Heart right ventricle (tissue), 16 donors: ENCODE measurements at regions of chr4 and their contacts with region 1.

Region 1: GRCh38 chr4:1249148-1249730 is 309 bp upstream of the CTBP1 start:
- DNase-seq: peak; percentile 85 to 89
- ATAC-seq: peak; percentile 40 to 75 (median 66)
- H3K4me3 ChIP-seq: peak overlapping the region; percentile 45 to 86 (median 78)
- H3K27ac ChIP-seq: peak overlapping the region; percentile 91 to 99 (median 98)
- H3K4me1 ChIP-seq: peaks cover 43 to 60% (median 51%) of the 10 kb centered on the region in 9 donors
- H3K27me3 ChIP-seq: no peaks in the 10 kb centered on the region
- CTCF ChIP-seq: peak in 1 of 9 donors; percentile 17

Region 2: DNA sequence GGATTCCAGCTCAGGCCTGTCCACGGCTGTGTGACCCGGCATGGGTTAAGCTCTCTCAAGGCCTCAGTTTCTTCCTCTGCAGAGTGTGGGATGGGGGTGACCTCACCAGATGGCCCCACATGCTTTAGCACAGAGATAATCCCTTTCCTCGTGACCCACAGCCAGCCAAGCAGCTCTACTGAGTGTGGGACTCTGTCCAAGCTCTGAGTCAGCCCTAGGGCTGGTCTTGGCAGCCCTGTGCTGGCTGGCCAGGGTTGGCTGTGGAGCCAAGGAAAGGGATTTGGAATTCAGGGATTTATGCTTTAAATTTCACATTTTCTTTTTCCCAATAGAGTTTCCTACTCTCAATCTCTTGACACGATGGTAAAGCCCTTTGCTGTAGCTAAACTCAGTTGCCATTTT is 57.1 kb before region 1 on chr4:
- intact Hi-C with region 1: loop called in 1 of 10 experiments (anchors 5 kb)
- DNase-seq: peak; percentile 76 to 90
- ATAC-seq: peak; percentile 93 to 97 (median 96)
- H3K4me3 ChIP-seq: peak overlapping the region in 1 of 10 donors; percentile 2
- H3K27ac ChIP-seq: peak overlapping the region; percentile 28 to 92 (median 84)
- H3K4me1 ChIP-seq: peaks cover 15 to 40% (median 34%) of the 10 kb centered on the region in 9 donors
- H3K27me3 ChIP-seq: no peaks in the 10 kb centered on the region
- CTCF ChIP-seq: no peak

Region 3: DNA sequence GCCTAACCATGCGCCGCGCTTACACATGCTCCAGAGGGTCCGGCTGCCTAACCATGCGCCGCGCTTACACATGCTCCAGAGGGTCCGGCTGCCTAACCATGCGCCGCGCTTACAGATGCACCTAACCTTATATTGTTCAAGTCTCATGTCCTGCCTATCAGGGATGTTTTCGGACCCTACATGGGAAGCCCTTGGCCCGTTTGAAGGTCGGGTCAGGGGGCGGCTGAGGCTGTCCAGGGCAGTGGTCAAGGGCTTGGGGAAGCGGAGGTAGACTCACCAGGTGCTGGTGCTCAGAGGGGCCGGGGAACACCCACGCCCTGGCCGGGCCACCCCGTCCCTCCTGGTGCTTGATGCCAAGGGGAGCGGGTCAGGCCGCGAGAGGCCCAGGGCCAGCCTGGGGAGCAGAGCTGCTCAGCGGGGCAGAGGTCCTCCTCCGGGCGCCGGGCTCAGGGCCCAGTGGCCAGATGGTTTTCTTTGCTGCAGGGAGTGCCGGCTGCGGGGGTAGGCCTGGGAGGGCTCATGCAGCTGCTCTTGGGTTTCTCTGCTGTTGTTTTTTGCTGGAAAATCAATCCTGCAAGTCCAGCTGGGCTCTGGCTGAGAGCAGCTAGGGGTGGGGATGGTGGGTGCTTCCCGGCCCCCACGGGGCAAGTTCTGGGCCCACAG is 41.5 kb before region 1 on chr4:
- intact Hi-C with region 1: loop called in 2 of 10 experiments (anchors 5 kb)
- DNase-seq: peak in 1 of 2 donors; percentile 75
- ATAC-seq: peak; percentile 12 to 59 (median 37)
- H3K4me3 ChIP-seq: peak overlapping the region in 5 of 10 donors; percentile 2 to 28 (median 11)
- H3K27ac ChIP-seq: peak overlapping the region; percentile 57 to 81 (median 70)
- H3K4me1 ChIP-seq: peaks cover 26 to 56% (median 49%) of the 10 kb centered on the region in 9 donors
- H3K27me3 ChIP-seq: no peaks in the 10 kb centered on the region
- CTCF ChIP-seq: no peak

Region 4: GRCh38 chr4:1233641-1234308 is 15.5 kb before region 1 on chr4:
- intact Hi-C with region 1: loop called in 1 of 10 experiments (anchors 1 kb)
- DNase-seq: peak in 1 of 2 donors; percentile 30
- ATAC-seq: peak; percentile 30 to 66 (median 54)
- H3K4me3 ChIP-seq: peak overlapping the region in 1 of 10 donors; percentile 17
- H3K27ac ChIP-seq: peak overlapping the region; percentile 3 to 80 (median 68)
- H3K4me1 ChIP-seq: peaks cover 15 to 36% (median 23%) of the 10 kb centered on the region in 9 donors
- H3K27me3 ChIP-seq: no peaks in the 10 kb centered on the region
- CTCF ChIP-seq: peak in 7 of 9 donors; percentile 7 to 56 (median 37)

Region 5: DNA sequence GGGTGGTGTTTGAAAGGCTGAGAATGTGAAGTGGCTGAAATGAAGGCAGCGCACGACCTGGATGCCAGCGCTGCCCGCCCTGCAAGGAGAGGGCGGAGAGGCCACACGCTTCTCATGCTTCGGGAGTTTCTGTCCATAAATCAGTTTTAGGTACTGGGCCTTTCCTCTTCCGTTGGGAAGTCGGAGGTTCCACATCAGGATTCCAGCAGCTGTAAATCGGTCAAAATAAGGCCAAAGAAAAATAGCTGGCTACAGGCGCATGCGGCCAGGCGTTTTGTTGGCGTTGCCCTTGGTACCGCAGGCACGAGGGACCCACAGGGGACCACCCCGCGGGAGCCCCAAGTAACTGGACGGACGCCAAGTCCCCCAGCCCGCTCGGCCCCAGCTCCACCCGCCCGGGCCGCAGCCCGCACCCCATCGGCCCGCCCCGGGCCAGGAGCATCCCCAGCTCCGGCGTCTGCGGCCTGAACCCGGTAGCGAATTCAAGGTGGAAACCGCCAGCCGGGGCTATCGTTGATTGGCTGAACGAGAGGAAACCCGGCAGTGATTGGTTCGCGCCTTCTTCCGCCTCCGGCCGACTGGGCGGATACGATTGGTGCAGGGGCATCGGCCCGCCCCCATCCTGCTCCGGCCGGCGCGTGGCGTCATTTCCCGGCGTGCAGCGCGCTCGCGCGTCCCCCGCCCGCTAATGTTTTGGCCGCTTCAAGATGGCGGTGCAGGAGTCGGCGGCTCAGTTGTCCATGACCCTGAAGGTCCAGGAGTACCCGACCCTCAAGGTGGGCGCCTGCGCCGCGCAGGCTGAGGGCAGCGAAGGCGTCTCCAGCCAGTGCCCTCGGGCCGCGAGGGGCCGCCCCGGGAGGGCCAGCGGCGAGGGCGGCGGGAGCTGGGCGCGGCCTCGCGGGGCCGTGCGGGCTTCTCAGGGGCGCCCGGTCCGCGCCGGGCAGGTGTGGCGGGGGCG is 40.2 kb after region 1 on chr4 and contains the start of gene MAEA:
- intact Hi-C with region 1: loop called in 1 of 10 experiments (anchors 5 kb)
- DNase-seq: peak; percentile 97
- ATAC-seq: peak; percentile 96 to 99 (median 99)
- H3K4me3 ChIP-seq: peak within 1 kb of the TSS; percentile 82 to 99 (median 96)
- H3K27ac ChIP-seq: peak within 1 kb of the TSS; percentile 81 to 97 (median 94)
- H3K4me1 ChIP-seq: peaks cover 19 to 52% (median 46%) of the 10 kb centered on the region in 9 donors
- H3K27me3 ChIP-seq: no peaks in the 10 kb centered on the region
- CTCF ChIP-seq: no peak
- total RNA-seq, gene MAEA: 39.1 to 72.8 (median 50.3) TPM

Region 6: DNA sequence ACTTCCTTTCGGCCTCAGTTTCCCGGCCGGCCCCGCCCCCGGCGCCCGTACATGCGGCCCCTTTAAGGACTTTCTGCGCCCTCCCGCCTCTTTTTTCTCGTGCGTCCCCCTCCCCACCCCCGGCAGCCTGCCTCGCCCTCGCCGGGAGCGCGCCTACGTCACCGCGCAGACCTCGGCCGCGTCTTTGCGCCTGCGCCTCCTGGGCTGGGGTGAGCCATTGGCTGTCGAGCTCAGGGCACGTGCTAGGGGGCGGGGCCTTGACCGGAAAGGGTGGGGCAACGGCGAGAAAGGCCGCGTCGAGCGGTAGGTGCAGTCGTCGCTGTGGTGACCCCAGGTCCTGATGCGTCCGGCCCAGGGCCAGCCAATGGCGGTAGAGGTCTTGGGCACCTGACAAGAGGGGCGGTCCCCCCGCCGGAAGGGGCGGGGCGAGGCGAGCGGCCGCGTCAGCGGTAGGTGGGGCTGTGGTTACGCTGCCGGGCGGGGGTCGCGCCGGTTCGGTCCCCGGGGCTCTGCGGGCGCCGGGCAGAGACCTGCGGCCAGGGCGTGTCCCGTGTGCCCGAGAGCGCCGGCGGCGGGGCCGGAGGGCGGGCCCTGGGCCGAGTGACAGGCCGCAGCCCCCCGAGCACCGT is 97.7 kb after region 1 on chr4 and contains the start of gene UVSSA:
- intact Hi-C with region 1: loop called (anchors 1 to 10 kb)
- DNase-seq: peak; percentile 100
- ATAC-seq: peak; percentile 93 to 99 (median 97)
- H3K4me3 ChIP-seq: peak within 1 kb of the TSS; percentile 75 to 97 (median 90)
- H3K27ac ChIP-seq: peak within 1 kb of the TSS; percentile 94 to 100 (median 98)
- H3K4me1 ChIP-seq: peaks cover 7 to 38% (median 21%) of the 10 kb centered on the region in 9 donors
- H3K27me3 ChIP-seq: no peaks in the 10 kb centered on the region
- CTCF ChIP-seq: no peak
- total RNA-seq, gene UVSSA: 5.2 to 8.3 (median 6.6) TPM